B cell (primary cell): ENCODE measurements at regions of chr11 and their contacts with region 1.

Region 1: GRCh38 chr11:88337181-88337986 is at the start of gene CTSC:
- DNase-seq: peak; percentile 86
- ATAC-seq: peak; percentile 93
- H3K4me3 ChIP-seq: peak within 1 kb of the TSS; percentile 80 to 96 (median 90)
- H3K4me3 Mint-ChIP-seq: peak within 1 kb of the TSS; percentile 96
- H3K27ac ChIP-seq: peak within 1 kb of the TSS; percentile 62 to 79
- H3K27ac Mint-ChIP-seq: peak within 1 kb of the TSS; percentile 97
- H3K4me1 ChIP-seq: peaks cover 10 to 20% of the 10 kb centered on the region in 2 donors
- H3K4me1 Mint-ChIP-seq: peaks cover 38% of the 10 kb centered on the region
- H3K27me3 ChIP-seq: no peaks in the 10 kb centered on the region
- H3K27me3 Mint-ChIP-seq: no peaks in the 10 kb centered on the region
- CTCF ChIP-seq: no peak
- total RNA-seq, gene CTSC: 18.8 and 20.3 TPM in 2 replicates

Region 2: DNA sequence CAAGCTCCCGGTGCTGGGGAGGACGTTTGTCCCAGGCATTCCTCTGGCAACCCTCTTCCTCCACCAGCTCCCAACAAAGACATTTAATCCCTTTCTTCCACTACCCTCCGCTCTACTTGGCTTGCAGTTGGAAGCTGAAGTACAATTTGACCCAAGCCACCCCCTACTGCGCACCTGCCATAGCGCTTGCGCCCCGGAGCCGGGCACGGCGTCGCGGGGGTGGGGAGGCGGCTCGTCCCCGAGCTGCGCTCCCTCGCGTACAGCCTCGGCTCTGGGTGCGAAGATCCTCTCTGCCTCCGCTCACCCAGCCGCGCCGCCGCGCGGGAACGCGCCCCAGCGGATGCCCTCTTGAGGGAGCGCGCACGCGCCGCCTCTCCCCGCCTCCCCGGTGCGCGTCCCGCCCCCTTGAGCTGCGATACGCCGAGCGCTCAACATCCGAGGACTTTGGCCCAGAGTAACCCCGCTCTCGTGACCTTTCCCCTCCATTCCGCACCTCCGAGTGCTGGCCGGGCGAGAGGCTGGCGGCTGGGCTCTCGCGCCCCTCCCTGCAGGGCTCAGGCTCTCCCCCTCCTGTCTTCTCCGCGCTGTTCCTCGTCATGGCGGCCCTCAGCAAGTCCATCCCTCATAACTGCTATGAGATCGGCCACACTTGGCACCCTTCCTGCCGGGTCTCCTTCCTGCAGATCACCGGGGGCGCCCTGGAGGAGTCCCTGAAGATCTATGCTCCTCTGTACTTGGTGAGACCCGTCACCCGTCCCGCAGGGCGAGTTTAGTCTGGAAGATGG is 1299.7 kb before region 1 on chr11 and contains the start of gene TMEM135:
- CTCF ChIA-PET with region 1: no interaction called
- POLR2A ChIA-PET with region 1: no interaction called
- intact Hi-C with region 1: loop called (anchors 2 kb)
- DNase-seq: peak; percentile 91
- ATAC-seq: peak; percentile 95
- H3K4me3 ChIP-seq: peak within 1 kb of the TSS; percentile 72 to 88 (median 75)
- H3K4me3 Mint-ChIP-seq: peak within 1 kb of the TSS; percentile 97
- H3K27ac ChIP-seq: peak within 1 kb of the TSS; percentile 38 to 67
- H3K27ac Mint-ChIP-seq: peak within 1 kb of the TSS; percentile 83
- H3K4me1 ChIP-seq: peaks cover 25 to 27% of the 10 kb centered on the region in 2 donors
- H3K4me1 Mint-ChIP-seq: peaks cover 30% of the 10 kb centered on the region
- H3K27me3 ChIP-seq: no peaks in the 10 kb centered on the region
- H3K27me3 Mint-ChIP-seq: no peaks in the 10 kb centered on the region
- CTCF ChIP-seq: no peak
- total RNA-seq, gene TMEM135: 7.5 and 19.5 TPM in 2 replicates

Region 3: GRCh38 chr11:88301488-88302140 is 35.8 kb before region 1 on chr11:
- CTCF ChIA-PET with region 1: no interaction called
- POLR2A ChIA-PET with region 1: no interaction called
- intact Hi-C with region 1: loop called (anchors 5 kb)
- DNase-seq: peak; percentile 51
- ATAC-seq: peak; percentile 75
- H3K4me3 ChIP-seq: peak overlapping the region in 1 of 5 experiments; percentile 32
- H3K4me3 Mint-ChIP-seq: peak overlapping the region; percentile 63
- H3K27ac ChIP-seq: peak overlapping the region; percentile 43 to 66
- H3K27ac Mint-ChIP-seq: peak overlapping the region; percentile 84
- H3K4me1 ChIP-seq: peaks cover 0 to 6% of the 10 kb centered on the region in 2 donors
- H3K4me1 Mint-ChIP-seq: peaks cover 21% of the 10 kb centered on the region
- H3K27me3 ChIP-seq: no peaks in the 10 kb centered on the region
- H3K27me3 Mint-ChIP-seq: no peaks in the 10 kb centered on the region
- CTCF ChIP-seq: no peak

Region 4: DNA sequence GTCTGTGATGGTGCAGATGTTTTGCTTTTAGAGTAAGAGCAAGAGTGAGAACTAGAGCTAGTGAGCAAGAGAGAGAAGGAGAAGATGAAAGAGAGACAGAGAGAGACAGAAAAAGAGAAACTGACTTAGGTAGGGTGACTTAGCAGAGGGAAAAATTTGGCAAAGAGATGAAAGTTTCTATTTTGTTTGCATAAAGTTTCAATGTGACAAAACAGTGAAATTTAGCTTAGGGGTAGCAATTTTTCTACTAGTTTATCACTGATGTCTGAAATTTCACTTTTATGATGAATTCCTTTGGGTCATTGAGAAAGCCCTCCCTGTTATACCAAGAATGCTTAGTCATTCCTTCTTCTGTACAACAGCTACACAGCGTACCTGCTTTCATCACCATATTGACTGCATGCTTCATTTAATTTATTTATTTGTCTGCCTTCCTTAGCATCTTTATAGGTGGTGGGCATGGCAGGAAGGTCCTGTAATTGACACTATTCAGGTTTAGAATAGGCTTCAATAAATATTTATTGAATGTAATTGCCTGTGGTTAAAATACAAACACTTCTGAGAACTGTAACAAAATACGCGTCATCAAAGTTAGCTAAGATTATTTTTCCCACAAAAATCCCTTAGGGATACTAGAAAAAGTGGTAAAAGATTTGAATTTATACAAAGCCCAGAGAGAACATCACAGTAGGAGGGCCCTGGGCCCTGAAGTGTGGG is 20.1 kb after region 1 on chr11:
- CTCF ChIA-PET with region 1: no interaction called
- POLR2A ChIA-PET with region 1: no interaction called
- intact Hi-C with region 1: loop called (anchors 2 kb)
- DNase-seq: no peak
- ATAC-seq: no peak
- H3K4me3 ChIP-seq: no peak overlapping the region
- H3K4me3 Mint-ChIP-seq: no peak overlapping the region
- H3K27ac ChIP-seq: peak overlapping the region in 1 of 2 donors; percentile 3
- H3K27ac Mint-ChIP-seq: no peak overlapping the region
- H3K4me1 ChIP-seq: peaks cover 6 to 7% of the 10 kb centered on the region in 2 donors
- H3K4me1 Mint-ChIP-seq: peaks cover 33% of the 10 kb centered on the region
- H3K27me3 ChIP-seq: no peaks in the 10 kb centered on the region
- H3K27me3 Mint-ChIP-seq: no peaks in the 10 kb centered on the region
- CTCF ChIP-seq: no peak

Region 5: DNA sequence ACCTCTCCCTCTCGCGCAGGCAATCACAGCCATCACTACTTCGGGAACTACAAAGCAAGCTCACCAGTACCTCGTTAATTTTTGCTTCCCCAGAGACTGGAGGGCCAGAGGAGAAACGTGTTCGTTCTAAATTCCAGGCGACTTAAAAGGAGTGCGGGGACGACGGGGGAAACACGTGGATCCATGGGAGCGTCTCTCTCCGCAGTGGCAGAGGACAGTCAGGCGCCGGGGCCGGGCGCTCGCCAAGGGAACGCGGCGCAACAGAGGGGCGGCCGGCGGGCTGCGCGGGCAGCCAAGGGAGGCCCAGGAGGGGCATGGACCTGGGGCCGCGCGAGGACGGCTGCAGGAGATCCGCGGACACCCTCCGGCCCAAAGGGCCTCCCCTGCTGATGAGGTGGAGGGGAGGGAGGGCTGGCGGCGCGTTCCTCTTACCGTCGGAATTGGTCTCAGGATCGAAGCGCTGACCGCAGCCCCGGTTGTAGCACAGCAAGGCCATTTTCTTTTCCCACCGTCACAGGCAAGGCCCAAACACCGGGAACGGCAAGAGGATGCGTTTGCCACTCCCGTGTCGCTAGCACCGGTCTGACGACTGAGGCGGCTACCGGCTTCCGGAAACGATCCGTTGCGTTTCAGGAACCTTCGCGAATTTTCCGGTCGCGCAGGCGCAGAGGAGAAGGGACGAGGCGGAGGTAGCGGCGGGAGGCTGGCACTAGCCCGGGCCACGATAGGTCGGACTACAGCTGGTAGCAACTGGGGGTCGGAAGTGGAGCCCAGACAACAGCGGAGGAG is 1885.3 kb after region 1 on chr11 and contains the start of gene CHORDC1:
- CTCF ChIA-PET with region 1: no interaction called
- POLR2A ChIA-PET with region 1: no interaction called
- intact Hi-C with region 1: loop called (anchors 5 kb)
- DNase-seq: peak; percentile 92
- ATAC-seq: peak; percentile 92
- H3K4me3 ChIP-seq: peak within 1 kb of the TSS; percentile 69 to 88 (median 84)
- H3K4me3 Mint-ChIP-seq: peak within 1 kb of the TSS; percentile 92
- H3K27ac ChIP-seq: peak within 1 kb of the TSS; percentile 86 to 88
- H3K27ac Mint-ChIP-seq: peak within 1 kb of the TSS; percentile 93
- H3K4me1 ChIP-seq: peaks cover 20 to 34% of the 10 kb centered on the region in 2 donors
- H3K4me1 Mint-ChIP-seq: peaks cover 49% of the 10 kb centered on the region
- H3K27me3 ChIP-seq: no peaks in the 10 kb centered on the region
- H3K27me3 Mint-ChIP-seq: peaks cover 6% of the 10 kb centered on the region
- CTCF ChIP-seq: no peak
- total RNA-seq, gene CHORDC1: 70.6 and 76.9 TPM in 2 replicates